Heart left ventricle (tissue), 16 donors: ENCODE measurements at regions of chr7 and their contacts with region 1.

Region 1: DNA sequence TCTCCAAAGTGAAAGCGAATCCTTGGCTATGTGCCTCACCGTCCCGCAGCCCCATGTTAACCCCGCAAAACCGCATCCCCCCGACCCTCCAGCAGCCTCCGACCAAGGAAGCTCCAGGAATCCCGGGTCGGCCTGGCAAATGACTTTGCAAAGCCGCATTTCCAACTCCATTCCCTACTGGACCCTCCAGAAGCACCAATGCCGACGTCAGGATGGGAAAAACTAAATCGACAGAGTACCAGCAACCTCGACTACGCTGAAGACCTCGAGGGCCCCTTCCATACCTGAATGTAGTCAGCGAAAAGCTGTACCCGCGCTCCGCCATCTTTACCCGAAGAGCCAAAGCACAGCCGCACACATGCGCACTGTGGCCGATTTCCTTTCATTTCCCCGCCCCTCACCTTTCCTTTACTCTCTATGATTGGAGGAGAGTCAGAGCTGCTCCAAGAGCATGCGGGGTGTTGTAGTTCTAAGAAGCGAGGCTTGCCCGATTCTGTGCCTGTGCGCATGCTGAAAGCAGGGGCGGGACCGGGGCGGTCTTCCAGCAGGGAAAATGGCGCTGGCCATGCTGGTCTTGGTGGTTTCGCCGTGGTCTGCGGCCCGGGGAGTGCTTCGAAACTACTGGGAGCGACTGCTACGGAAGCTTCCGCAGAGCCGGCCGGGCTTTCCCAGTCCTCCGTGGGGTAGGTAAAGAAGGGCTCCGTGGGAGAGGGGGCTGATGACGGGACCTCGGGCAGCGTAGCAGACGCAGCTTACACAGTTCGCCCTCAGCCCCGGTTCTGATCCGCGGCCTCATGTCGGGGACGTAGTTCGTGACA is at the starts of genes MRPL32 and PSMA2:
- DNase-seq: peak; percentile 95 to 97 (median 96)
- ATAC-seq: peak; percentile 100
- H3K4me3 ChIP-seq: peak within 1 kb of the TSS; percentile 61 to 97 (median 72)
- H3K27ac ChIP-seq: peak within 1 kb of the TSS; percentile 16 to 88 (median 80)
- H3K4me1 ChIP-seq: peaks cover 6 to 57% (median 37%) of the 10 kb centered on the region in 12 donors
- H3K27me3 ChIP-seq: no peaks in the 10 kb centered on the region
- CTCF ChIP-seq: no peak
- POLR2A ChIP-seq: peak in 1 of 2 donors; percentile 72
- total RNA-seq, gene MRPL32: 49.0 to 71.7 (median 60.8) TPM
- total RNA-seq, gene PSMA2: 41.8 to 106 (median 75.8) TPM

Region 2: DNA sequence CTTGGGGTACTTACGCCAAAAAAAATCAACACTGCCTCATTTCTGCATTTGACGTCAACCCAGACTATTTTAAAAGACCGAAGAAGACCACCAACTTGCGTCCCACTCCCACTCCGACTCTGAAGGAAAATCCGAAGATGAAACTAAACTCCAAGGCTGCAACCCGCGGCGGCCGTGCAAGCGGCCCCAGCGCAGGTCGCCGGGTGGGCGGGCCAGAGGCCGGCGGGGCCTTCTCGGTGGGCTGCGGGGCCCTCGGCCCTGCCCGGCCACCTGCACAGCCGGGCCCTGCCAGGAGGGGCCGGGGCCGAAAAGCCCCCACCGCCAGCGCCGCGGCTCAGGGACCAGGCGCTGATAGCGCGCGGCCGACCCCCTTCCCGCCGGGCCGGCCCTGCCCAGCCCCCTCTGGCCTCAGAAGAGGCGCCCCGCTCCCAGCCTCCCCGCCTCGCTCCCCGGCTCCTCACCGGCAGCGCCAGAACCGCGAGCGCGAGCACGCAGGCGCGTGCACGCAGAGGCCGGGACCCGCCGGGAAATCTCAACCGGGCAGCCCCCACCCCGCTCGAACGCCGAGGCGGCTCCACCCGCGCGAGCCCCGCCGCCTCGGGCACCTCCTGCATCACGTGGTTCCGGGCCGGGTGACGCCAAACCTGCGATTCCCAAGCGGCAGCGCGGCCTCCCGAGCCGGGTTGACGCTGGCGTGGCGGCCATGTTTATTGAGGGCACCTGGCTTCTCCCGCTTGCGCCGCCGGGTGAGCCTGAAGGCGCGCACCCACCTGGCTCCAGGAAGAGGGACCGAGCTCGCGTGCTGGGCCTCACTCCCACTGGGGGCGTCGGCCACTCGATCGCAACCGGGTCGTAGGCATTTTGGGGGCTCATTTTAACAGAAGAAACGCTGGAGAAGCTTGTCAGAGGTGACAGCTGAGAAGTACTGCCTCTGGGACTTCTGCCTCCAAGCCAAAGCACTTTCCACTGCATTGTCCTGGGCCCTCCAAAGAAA is 20.3 kb before region 1 on chr7 and contains the start of gene C7orf25:
- intact Hi-C with region 1: loop called in 4 of 10 experiments (anchors 1 to 2 kb)
- DNase-seq: peak; percentile 97 to 99 (median 98)
- ATAC-seq: peak; percentile 93 to 99 (median 98)
- H3K4me3 ChIP-seq: peak within 1 kb of the TSS; percentile 61 to 95 (median 84)
- H3K27ac ChIP-seq: peak within 1 kb of the TSS; percentile 49 to 90 (median 80)
- H3K4me1 ChIP-seq: peaks cover 0 to 43% (median 11%) of the 10 kb centered on the region in 12 donors
- H3K27me3 ChIP-seq: no peaks in the 10 kb centered on the region
- CTCF ChIP-seq: no peak
- POLR2A ChIP-seq: peak in 1 of 2 donors; percentile 69
- total RNA-seq, gene C7orf25: 1.8 to 9.1 (median 4.0) TPM

Region 3: DNA sequence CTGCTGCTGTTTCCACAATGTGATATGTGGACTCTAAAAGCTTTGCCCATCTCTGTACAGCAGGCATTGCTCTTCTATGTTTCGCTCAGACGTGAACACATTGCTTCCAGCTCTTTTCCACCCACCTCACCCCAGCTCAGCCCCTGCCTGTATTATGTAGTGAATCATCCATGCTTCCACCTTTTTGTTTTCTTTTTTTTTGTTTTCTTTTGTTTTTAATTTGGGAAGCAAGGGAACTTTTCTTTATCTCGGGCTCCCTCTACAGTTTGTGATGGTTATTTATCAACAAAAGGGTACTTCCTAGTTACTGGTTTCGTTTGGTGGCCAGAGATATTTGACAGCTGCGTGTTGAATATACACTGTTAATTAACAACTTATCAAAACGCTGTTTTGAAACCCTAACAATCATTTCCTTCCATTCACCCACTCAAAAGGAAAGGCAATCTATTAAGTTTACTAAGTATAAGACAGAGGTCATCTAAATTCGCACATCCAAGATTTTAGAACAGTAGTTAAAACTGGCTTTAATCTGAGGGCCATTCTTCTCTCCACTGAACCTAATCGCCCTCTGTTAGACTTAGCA is 523.0 kb after region 1 on chr7:
- intact Hi-C with region 1: loop called in 1 of 10 experiments (anchors 10 kb)
- DNase-seq: no peak
- ATAC-seq: peak in 1 of 4 donors; percentile 24
- H3K4me3 ChIP-seq: peak overlapping the region in 1 of 12 donors; percentile 14
- H3K27ac ChIP-seq: no peak overlapping the region
- H3K4me1 ChIP-seq: peaks cover 0 to 6% (median 0%) of the 10 kb centered on the region in 12 donors
- H3K27me3 ChIP-seq: no peaks in the 10 kb centered on the region
- CTCF ChIP-seq: peak in 11 of 12 donors; percentile 8 to 59 (median 37)
- POLR2A ChIP-seq: no peak

Region 4: GRCh38 chr7:43729214-43729923 is 797.3 kb after region 1 on chr7 and contains the start of gene COA1:
- intact Hi-C with region 1: loop called in 2 of 10 experiments (anchors 10 kb)
- DNase-seq: peak; percentile 83 to 91 (median 89)
- ATAC-seq: peak; percentile 98 to 99 (median 99)
- H3K4me3 ChIP-seq: peak within 1 kb of the TSS; percentile 60 to 95 (median 81)
- H3K27ac ChIP-seq: peak within 1 kb of the TSS; percentile 82 to 92 (median 88)
- H3K4me1 ChIP-seq: peaks cover 0 to 42% (median 19%) of the 10 kb centered on the region in 12 donors
- H3K27me3 ChIP-seq: no peaks in the 10 kb centered on the region
- CTCF ChIP-seq: peak in 1 of 12 donors; percentile 19
- POLR2A ChIP-seq: peak in 1 of 2 donors; percentile 57
- total RNA-seq, gene COA1: 57.5 to 81.2 (median 68.2) TPM